ENCODE measurements at regions of chr6 and their contacts with region 1.

Region 1: GRCh38 chr6:37131104-37131959 is 38.6 kb upstream of the PIM1 start:
- DNase-seq: peak; percentile 78
- ATAC-seq: peak; percentile 78

Region 2: GRCh38 chr6:37102279-37103168 is 28.8 kb before region 1 on chr6:
- intact Hi-C with region 1: loop called (anchors 2 kb)
- DNase-seq: peak; percentile 92
- ATAC-seq: peak; percentile 94

Region 3: DNA sequence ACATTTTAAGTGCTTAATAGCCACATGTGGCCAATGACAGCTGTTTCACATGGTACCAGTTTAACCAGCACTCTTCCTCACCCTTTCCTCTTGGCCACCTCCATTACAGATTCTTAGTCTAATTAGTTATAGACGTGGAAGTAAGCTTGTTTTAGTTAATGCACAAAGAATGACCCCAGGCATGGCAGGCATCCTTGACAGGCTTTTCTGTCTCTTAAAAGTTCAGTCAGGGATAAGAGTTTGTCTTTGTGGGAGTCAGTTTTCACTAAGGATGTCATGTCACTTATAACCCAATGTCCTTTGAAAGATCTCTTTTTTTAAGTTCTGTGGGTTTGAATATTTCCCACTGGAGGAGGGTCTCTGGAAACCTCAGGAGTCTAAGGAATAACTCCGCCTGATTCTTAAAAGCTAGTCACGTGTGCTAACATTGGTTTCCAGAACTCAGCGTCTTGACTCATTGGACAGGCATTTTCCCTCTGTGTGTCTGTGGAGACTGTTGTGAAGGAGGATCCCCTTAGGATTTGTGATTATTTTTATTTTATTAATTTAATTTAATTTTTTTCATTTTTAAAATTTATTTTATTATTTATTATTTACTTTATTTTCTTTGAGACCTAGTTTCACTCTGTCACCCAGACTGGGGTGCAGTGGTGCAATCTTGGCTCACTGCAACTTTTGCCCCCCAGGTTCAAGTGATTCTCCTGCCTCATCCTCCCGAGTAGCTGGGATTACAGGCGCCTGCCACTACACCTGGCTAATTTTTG is 859.6 kb after region 1 on chr6:
- intact Hi-C with region 1: no loop called
- DNase-seq: no peak
- ATAC-seq: peak; percentile 41

Measured in Right ventricle myocardium inferior (tissue), 1 donor.